Ascending aorta (tissue), 2 donors: ENCODE measurements at regions of chr1 and their contacts with region 1.

Region 1: DNA sequence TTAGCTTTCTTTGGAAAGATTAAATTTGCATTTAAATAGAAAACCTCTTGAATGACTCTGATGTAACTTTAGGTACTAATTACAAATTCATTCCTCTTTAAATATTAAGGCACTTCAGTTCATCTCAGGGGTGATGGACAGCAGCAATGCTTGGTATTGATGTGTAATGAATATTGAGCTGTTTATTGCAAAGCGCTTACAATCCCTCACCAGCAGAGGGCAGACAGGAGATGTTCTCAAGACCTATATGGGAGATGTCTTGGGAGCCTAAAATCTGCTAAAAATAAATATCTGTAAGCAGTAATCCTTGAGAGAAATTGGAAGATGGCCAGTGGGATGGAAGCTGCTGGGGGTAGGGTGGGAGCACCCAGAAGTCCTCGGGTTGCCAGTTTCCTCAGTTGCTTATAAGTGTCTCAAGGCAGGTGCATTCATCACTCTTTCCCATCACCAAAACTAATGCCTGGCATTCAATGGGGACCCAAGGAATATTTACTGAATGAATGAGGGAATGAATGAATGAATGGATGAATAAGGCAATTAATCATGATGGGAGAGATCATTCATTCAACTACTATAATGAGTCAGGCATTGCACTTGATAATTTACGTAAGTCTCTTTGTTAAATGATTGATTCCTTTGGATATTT is 2.3 kb downstream of the KLHDC8A start:
- DNase-seq: peak in 1 of 2 donors; percentile 78
- H3K4me3 ChIP-seq: no peak overlapping the region
- H3K27ac ChIP-seq: no peak overlapping the region
- H3K4me1 ChIP-seq: no peaks in the 10 kb centered on the region
- H3K27me3 ChIP-seq: no peaks in the 10 kb centered on the region
- CTCF ChIP-seq: peak; percentile 65 to 84 (median 83)

Region 2: DNA sequence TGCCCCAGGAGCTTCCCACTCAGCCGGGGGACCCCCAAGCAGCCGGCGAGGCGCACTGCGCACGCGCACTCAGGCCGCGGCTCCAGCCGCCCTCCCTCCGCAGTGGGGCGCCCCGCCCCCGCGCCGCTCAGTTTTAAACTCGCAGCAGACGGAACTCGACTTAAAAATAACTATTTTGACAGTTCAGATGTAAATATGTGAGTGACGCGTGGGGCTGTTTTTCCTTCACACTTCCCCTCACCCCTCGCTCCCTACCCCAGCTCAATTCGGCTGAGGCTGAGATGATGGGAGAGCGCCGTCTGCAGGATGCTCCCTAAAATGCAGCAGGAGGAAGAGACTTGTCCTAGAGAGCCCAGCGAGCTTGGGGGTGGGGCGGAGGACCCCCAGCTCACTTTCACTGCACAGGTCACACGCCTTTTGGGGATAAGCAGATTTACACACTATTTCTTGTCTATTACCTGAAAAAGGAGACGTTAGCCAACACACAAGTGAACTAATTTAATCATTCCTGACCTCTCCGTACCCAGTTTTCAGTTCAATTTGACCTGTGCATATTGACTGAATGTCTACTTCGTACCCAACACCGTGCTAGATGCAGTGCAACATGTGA is 76.4 kb after region 1 on chr1:
- intact Hi-C with region 1: loop called (anchors 1 kb)
- DNase-seq: peak in 1 of 2 donors; percentile 70
- H3K4me3 ChIP-seq: peak overlapping the region; percentile 38 to 73
- H3K27ac ChIP-seq: no peak overlapping the region
- H3K4me1 ChIP-seq: peaks cover 0 to 4% of the 10 kb centered on the region in 2 donors
- H3K27me3 ChIP-seq: no peaks in the 10 kb centered on the region
- CTCF ChIP-seq: peak; percentile 75 to 93 (median 82)

Region 3: DNA sequence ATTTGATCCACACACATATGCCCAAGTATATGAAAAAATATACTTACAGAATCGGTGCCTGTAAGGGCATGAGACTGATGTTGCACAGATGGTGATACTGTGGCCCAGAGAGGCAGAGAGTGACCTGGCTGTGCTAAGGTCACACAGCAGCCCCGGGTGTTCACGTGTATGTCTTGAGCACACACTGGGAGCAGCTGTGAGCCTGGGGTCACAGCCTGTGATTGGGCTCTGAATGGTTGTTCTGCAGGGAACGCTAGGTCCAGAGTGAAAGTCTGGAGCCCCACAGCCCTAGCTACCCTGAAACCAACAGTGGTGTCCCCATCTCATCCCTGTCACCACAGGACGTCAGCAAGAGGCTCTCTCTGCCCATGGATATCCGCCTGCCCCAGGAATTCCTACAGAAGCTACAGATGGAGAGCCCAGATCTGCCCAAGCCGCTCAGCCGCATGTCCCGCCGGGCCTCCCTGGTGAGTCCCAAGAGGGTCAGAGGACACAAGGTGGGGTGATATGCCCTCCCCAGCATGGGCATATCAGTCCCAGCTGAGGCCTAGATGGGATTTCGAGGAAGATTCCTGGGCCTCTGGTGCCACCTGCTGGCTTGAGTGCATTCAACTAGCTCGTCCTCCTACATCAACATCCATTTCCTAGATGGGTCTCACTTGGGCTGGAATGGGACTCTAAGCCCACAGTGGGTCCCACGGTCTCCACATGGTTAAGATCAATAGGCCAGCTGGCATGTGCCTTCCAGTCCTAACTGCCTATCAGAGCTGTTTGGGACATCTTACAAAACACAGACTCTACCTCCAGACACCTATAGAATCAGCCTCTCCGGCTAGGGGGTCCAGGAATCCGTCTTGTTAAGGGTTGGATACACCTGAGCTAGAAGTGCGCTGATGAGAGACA is 169.8 kb after region 1 on chr1:
- intact Hi-C with region 1: loop called (anchors 2 kb)
- DNase-seq: peak in 1 of 2 donors; percentile 79
- H3K4me3 ChIP-seq: no peak overlapping the region
- H3K27ac ChIP-seq: no peak overlapping the region
- H3K4me1 ChIP-seq: peaks cover under 1 to 5% of the 10 kb centered on the region in 2 donors
- H3K27me3 ChIP-seq: no peaks in the 10 kb centered on the region
- CTCF ChIP-seq: peak; percentile 61 to 78 (median 72)